Body of pancreas (tissue), 4 donors: ENCODE measurements at regions of chrX and their contacts with region 1.

Region 1: DNA sequence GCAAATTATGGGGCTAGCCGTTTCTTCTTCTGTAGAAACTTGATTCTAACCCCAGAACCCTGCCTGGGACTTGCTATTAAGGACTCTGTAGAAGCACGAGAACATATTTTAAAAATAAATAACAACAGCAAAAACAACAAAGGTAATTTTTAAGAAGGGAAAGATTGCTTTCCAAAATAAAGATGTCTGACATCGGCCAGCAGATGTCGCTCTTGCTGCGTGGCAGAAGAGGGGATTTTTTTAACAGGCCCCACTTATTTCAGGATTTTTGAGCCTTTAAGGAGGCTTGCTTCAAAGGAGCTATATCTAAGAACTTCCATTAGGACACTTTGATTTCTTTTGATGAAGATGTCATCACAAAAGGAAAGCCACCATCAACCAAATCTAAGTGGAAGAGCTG is 62.8 kb upstream of the EGFL6 start:
- DNase-seq: peak; percentile 25 to 54 (median 44)
- ATAC-seq: no peak
- H3K4me3 ChIP-seq: no peak overlapping the region
- H3K27ac ChIP-seq: no peak overlapping the region
- H3K4me1 ChIP-seq: no peaks in the 10 kb centered on the region
- H3K27me3 ChIP-seq: no peaks in the 10 kb centered on the region
- CTCF ChIP-seq: peak; percentile 47 to 76 (median 68)
- POLR2A ChIP-seq: no peak

Region 2: DNA sequence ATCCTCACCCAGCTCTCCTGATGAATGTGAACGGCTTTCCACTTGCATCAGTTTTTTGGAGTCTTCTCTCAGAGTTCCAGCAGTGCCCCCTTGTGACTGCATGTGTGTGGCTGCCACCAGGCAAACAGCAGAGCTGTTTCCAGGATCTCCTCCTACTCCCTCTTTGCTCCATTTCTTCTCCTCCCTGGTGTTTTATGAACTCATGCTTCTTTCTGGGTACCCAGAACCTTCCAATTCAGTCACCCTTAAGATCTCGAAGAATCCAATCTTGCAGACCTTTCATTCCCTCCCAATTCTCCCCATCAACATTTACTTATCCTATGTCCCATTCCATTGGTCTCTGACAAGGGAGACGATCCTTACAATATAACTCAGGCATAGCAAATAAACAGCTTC is 139.6 kb after region 1 on chrX:
- intact Hi-C with region 1: loop called (anchors 5 kb)
- DNase-seq: peak; percentile 62 to 80 (median 66)
- ATAC-seq: peak; percentile 70
- H3K4me3 ChIP-seq: no peak overlapping the region
- H3K27ac ChIP-seq: no peak overlapping the region
- H3K4me1 ChIP-seq: no peaks in the 10 kb centered on the region
- H3K27me3 ChIP-seq: no peaks in the 10 kb centered on the region
- CTCF ChIP-seq: peak; percentile 36 to 60 (median 57)
- POLR2A ChIP-seq: no peak

Region 3: GRCh38 chrX:14029425-14030173 is 523.0 kb after region 1 on chrX and contains the start of gene GEMIN8:
- intact Hi-C with region 1: loop called (anchors 5 kb)
- DNase-seq: peak; percentile 85 to 92 (median 89)
- ATAC-seq: peak; percentile 97
- H3K4me3 ChIP-seq: peak within 1 kb of the TSS; percentile 14 to 52
- H3K27ac ChIP-seq: peak within 1 kb of the TSS; percentile 66 to 91 (median 82)
- H3K4me1 ChIP-seq: peaks cover 21% of the 10 kb centered on the region
- H3K27me3 ChIP-seq: no peaks in the 10 kb centered on the region
- CTCF ChIP-seq: no peak
- POLR2A ChIP-seq: peak; percentile 73 to 90 (median 89)
- total RNA-seq, gene GEMIN8: 18.4 to 34.9 TPM